ENCODE measurements at regions of chr5 and their contacts with region 1.

Region 1: GRCh38 chr5:176812269-176813259 is 2.2 kb downstream of the UNC5A start:
- DNase-seq: peak in 1 of 2 experiments; percentile 86
- H3K4me3 ChIP-seq: no peak overlapping the region
- H3K27ac ChIP-seq: no peak overlapping the region
- H3K4me1 ChIP-seq: peaks cover 0 to 49% (median 21%) of the 10 kb centered on the region in 4 experiments; a peak in 6 of 7 replicates
- H3K27me3 ChIP-seq: peaks cover 14 to 42% (median 41%) of the 10 kb centered on the region in 4 experiments
- CTCF ChIP-seq: peak in 2 of 3 experiments; percentile 76 to 77; a peak in 3 of 4 replicates
- EP300 ChIP-seq: no peak
- POLR2A ChIP-seq: no peak
- RAD21 ChIP-seq: peak; percentile 73 to 82

Region 2: GRCh38 chr5:175867587-175868347 is 944.8 kb before region 1 on chr5:
- CTCF ChIA-PET with region 1: no interaction called
- POLR2A ChIA-PET with region 1: no interaction called
- DNase-seq: peak in 1 of 2 experiments; percentile 65
- H3K4me3 ChIP-seq: no peak overlapping the region
- H3K27ac ChIP-seq: no peak overlapping the region
- H3K4me1 ChIP-seq: peaks cover 9 to 13% (median 11%) of the 10 kb centered on the region in 4 experiments; a peak in 6 of 7 replicates
- H3K27me3 ChIP-seq: peaks cover 0 to 13% (median 3%) of the 10 kb centered on the region in 4 experiments; a peak in 3 of 7 replicates
- CTCF ChIP-seq: peak; percentile 71 to 86 (median 78)
- EP300 ChIP-seq: no peak
- POLR2A ChIP-seq: no peak
- RAD21 ChIP-seq: peak; percentile 82 to 87

Region 3: DNA sequence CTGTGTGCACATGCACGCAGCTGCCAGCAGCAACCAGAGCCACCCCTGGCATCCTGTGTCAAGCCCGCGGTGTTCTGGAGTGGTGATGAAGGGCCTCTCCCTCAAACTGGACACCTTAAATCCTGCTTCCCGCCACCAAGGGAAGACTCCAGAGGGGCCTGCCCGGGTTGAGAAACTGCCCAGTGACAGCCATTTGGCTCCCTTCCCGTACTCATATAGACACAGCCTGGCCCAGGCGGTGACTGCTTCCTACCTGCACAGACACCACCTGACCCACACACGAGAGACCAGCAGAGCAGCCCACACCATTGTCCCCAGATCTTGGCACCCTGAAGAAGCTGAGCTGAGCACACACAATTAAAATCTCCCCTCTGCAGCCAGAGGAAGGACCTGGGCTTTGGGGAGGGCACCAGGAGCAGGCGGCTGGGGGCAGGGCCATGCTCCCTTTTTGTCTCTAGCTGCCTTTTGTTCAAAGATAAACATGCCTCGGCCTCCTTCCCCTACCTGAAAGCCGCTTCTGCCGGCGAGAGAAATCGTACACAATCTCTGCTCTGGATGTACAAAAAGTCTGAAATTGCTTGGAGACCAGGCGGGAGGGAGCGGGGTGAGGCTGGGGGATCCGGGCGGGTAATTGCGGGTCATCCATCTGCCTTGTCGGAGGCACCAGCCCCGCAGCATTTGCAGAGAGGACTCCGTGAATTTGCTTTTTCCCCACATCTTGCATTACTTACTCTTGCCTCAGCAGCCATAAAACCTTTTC is 86.9 kb before region 1 on chr5:
- CTCF ChIA-PET with region 1: interaction called, 13 read pairs
- POLR2A ChIA-PET with region 1: no interaction called
- DNase-seq: peak in 1 of 2 experiments; percentile 57
- H3K4me3 ChIP-seq: no peak overlapping the region
- H3K27ac ChIP-seq: no peak overlapping the region
- H3K4me1 ChIP-seq: peaks cover 0 to 24% (median 10%) of the 10 kb centered on the region in 4 experiments; a peak in 5 of 7 replicates
- H3K27me3 ChIP-seq: peaks cover 0 to 6% (median 4%) of the 10 kb centered on the region in 4 experiments; a peak in 3 of 7 replicates
- CTCF ChIP-seq: no peak
- EP300 ChIP-seq: no peak
- POLR2A ChIP-seq: no peak
- RAD21 ChIP-seq: no peak

Region 4: DNA sequence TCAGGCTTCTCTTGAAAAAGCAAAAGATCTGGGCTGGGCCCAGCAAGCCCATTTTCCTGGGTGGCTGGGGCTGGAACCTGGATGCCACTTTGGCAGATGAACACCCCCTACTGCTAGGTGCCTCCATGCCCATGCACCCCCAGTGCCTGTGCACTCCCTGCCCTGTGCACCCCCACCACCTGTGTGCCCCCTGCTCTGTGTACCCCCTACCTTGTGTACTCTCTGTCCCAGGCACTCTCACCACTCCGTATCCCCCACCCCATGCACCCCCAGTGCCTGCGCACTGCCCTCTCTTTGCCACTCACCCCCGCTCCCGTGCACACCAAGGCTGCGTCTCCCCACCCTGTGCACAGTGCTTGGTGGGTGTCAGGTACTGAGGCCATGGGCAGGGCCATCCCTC is 12.0 kb after region 1 on chr5:
- CTCF ChIA-PET with region 1: interaction called, 18 read pairs
- POLR2A ChIA-PET with region 1: interaction called, 3 read pairs
- DNase-seq: no peak
- H3K4me3 ChIP-seq: no peak overlapping the region
- H3K27ac ChIP-seq: no peak overlapping the region
- H3K4me1 ChIP-seq: peaks cover 0 to 3% (median 0%) of the 10 kb centered on the region in 4 experiments; a peak in 3 of 7 replicates
- H3K27me3 ChIP-seq: no peaks in the 10 kb centered on the region
- CTCF ChIP-seq: no peak
- EP300 ChIP-seq: no peak
- POLR2A ChIP-seq: no peak
- RAD21 ChIP-seq: no peak

Region 5: DNA sequence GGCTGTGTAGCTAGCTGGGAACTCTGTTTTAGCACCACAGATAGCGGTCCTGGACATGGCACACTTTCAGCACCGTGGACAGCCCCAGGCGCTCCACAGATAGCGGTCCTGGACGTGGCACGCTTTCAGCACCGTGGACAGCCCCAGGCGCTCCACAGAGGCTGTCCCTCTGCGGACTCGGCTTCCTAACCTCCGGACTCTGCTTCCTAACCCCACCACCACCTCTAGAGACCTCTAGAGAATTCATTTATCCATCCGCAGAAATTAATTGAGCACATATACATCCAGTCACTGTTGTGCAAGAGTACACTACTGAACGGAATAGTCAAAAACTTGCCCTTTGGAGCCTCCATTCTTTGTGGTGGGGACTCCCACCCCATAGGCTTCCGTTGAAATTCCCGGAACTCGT is 25.1 kb after region 1 on chr5:
- CTCF ChIA-PET with region 1: interaction called, 17 read pairs
- POLR2A ChIA-PET with region 1: interaction called, 3 read pairs
- DNase-seq: peak; percentile 41 to 95
- H3K4me3 ChIP-seq: no peak overlapping the region
- H3K27ac ChIP-seq: no peak overlapping the region
- H3K4me1 ChIP-seq: peaks cover 0 to 10% (median 5%) of the 10 kb centered on the region in 4 experiments; a peak in 6 of 7 replicates
- H3K27me3 ChIP-seq: peaks cover 0 to 20% (median 5%) of the 10 kb centered on the region in 4 experiments; a peak in 4 of 7 replicates
- CTCF ChIP-seq: no peak
- EP300 ChIP-seq: no peak
- POLR2A ChIP-seq: no peak
- RAD21 ChIP-seq: peak; percentile 13 to 46; a peak in 2 of 4 replicates

Region 6: DNA sequence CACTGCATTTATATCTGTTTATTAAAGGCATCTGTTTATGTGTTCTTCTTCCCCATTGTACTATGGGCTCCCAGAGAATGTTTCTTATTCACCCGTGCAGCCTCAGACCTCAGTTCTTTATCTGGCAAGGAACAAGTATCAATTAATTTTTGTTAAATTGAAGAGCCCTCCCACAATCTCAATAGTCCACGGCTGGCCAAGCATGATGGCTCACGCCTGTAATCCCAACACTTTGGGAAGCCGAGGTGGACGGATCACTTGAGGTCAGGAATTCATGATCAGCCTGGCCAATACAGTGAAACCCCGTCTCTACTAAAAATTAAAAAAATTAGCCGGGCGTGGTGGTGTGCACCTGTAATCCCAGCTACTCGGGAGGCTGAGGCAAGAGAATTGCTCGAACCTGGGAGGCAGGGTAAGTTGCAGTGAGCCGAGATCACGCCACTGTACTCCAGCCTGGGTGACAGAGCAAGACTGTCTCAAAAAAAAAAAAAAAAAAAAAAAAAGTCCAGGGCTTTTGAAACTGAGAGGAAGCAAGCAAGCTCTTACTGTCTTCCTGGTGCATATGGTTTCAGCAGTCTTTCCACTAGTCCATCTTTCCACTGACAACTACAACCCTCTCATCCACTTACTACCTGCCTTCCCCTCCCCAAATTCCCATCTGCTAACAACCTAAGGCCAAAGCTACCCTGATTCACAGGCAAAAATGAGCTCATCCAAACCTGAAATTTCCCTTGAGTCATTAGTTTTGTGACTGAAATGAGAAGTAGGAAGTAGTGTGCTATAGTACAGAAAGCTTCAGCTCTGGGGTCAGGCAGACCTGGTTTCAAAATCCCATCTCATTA is 88.9 kb after region 1 on chr5:
- CTCF ChIA-PET with region 1: interaction called, 11 read pairs
- POLR2A ChIA-PET with region 1: no interaction called
- DNase-seq: no peak
- H3K4me3 ChIP-seq: no peak overlapping the region
- H3K27ac ChIP-seq: no peak overlapping the region
- H3K4me1 ChIP-seq: peaks cover 0 to 6% (median 3%) of the 10 kb centered on the region in 4 experiments; a peak in 5 of 7 replicates
- H3K27me3 ChIP-seq: no peaks in the 10 kb centered on the region
- CTCF ChIP-seq: no peak
- EP300 ChIP-seq: no peak
- POLR2A ChIP-seq: no peak
- RAD21 ChIP-seq: no peak

Region 7: GRCh38 chr5:176959051-176959450 is 146.5 kb after region 1 on chr5:
- CTCF ChIA-PET with region 1: interaction called, 13 read pairs
- POLR2A ChIA-PET with region 1: no interaction called
- DNase-seq: no peak
- H3K4me3 ChIP-seq: no peak overlapping the region
- H3K27ac ChIP-seq: no peak overlapping the region
- H3K4me1 ChIP-seq: no peaks in the 10 kb centered on the region
- H3K27me3 ChIP-seq: no peaks in the 10 kb centered on the region
- CTCF ChIP-seq: peak in 1 of 3 experiments; percentile 55; a peak in 2 of 4 replicates
- EP300 ChIP-seq: no peak
- POLR2A ChIP-seq: no peak
- RAD21 ChIP-seq: peak; percentile 70 to 72